PC-3 (cell line): ENCODE measurements at regions of chr6 and their contacts with region 1.

Region 1: GRCh38 chr6:119147101-119148053 is 68.9 kb upstream of the FAM184A start:
- DNase-seq: peak; percentile 95
- ATAC-seq: peak; percentile 77
- H3K4me3 ChIP-seq: peak overlapping the region; percentile 53
- H3K27ac ChIP-seq: peak overlapping the region; percentile 92
- H3K4me1 ChIP-seq: peaks cover 38% of the 10 kb centered on the region
- H3K27me3 ChIP-seq: no peaks in the 10 kb centered on the region
- CTCF ChIP-seq: no peak

Region 2: DNA sequence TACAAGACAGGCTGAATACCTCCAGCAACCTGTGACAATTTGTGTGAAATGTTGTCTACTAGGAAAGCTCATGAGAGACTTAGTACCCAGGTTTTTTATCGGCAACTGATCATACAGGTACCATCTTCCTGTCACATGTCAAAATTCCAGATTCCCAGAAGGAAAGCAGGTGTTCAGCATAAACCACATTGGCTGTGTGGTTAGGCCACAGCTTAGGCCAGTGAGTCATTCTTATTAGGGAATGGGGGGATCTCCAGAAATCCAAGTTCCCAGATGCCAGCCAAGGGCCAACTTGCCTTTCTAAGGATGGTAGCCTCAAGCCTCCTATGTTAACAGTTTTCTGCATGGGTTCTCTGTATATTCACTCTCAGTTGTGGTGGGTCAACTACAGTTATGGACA is 134.9 kb before region 1 on chr6:
- CTCF ChIA-PET with region 1: no interaction called
- POLR2A ChIA-PET with region 1: no interaction called
- intact Hi-C with region 1: no loop called
- DNase-seq: no peak
- ATAC-seq: no peak
- H3K4me3 ChIP-seq: no peak overlapping the region
- H3K27ac ChIP-seq: no peak overlapping the region
- H3K4me1 ChIP-seq: no peaks in the 10 kb centered on the region
- H3K27me3 ChIP-seq: no peaks in the 10 kb centered on the region
- CTCF ChIP-seq: no peak

Region 3: DNA sequence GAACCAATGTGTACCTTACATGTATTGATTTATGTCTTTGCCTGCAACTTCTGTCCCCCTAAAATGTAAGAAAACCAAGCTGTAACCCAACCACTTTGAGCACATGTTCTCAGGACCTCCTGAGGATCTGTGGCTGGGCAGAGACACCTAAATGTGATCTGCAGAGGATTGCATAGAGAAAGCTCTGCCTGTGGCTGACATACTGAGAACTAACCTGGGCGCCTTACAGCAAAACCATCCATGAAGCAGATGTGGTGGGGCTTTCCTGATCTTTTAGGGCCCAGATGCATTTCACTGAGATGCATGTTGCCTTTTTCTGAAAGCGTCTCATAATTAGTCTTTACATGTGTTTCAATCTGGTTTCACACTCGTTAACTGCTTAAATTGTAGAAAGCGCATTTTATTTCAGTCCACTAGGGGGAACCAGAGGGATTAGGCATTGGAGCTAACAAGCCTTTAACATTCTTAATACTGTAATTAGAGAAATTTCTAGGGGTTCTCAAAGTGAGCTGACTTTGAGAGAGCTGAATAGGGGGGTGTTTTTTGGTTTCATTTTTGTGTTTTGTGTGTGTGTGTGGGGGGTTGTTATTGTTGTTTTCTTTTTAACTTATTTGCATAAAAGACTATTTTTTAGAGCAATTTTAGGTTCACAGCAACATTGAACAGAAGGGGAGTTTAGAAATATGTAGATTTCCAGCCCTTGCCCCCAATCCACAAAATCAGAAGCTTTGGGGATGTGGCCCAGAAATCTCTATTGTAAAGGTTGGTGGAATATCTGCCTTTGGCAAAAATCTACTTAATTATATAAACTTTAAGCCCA is 18.0 kb before region 1 on chr6:
- CTCF ChIA-PET with region 1: interaction called, 11 read pairs
- POLR2A ChIA-PET with region 1: interaction called, 5 read pairs
- intact Hi-C with region 1: loop called (anchors 1 kb)
- DNase-seq: peak; percentile 75
- ATAC-seq: peak; percentile 62
- H3K4me3 ChIP-seq: peak overlapping the region; percentile 13; the same call in 1 of the 2 replicates
- H3K27ac ChIP-seq: peak overlapping the region; percentile 74
- H3K4me1 ChIP-seq: peaks cover 26% of the 10 kb centered on the region
- H3K27me3 ChIP-seq: no peaks in the 10 kb centered on the region
- CTCF ChIP-seq: peak; percentile 81

Region 4: GRCh38 chr6:119360262-119360915 is 213.0 kb after region 1 on chr6:
- CTCF ChIA-PET with region 1: no interaction called
- POLR2A ChIA-PET with region 1: no interaction called
- intact Hi-C with region 1: no loop called
- DNase-seq: no peak
- ATAC-seq: no peak
- H3K4me3 ChIP-seq: no peak overlapping the region
- H3K27ac ChIP-seq: no peak overlapping the region
- H3K4me1 ChIP-seq: no peaks in the 10 kb centered on the region
- H3K27me3 ChIP-seq: no peaks in the 10 kb centered on the region
- CTCF ChIP-seq: no peak

Region 5: GRCh38 chr6:119627908-119628669 is 480.7 kb after region 1 on chr6:
- CTCF ChIA-PET with region 1: no interaction called
- POLR2A ChIA-PET with region 1: no interaction called
- intact Hi-C with region 1: loop called (anchors 1 kb)
- DNase-seq: peak; percentile 71
- ATAC-seq: peak; percentile 78
- H3K4me3 ChIP-seq: peak overlapping the region; percentile 7; the same call in 1 of the 2 replicates
- H3K27ac ChIP-seq: peak overlapping the region; percentile 93
- H3K4me1 ChIP-seq: peaks cover 31% of the 10 kb centered on the region
- H3K27me3 ChIP-seq: no peaks in the 10 kb centered on the region
- CTCF ChIP-seq: peak; percentile 32; the same call in 1 of the 2 replicates

Region 6: DNA sequence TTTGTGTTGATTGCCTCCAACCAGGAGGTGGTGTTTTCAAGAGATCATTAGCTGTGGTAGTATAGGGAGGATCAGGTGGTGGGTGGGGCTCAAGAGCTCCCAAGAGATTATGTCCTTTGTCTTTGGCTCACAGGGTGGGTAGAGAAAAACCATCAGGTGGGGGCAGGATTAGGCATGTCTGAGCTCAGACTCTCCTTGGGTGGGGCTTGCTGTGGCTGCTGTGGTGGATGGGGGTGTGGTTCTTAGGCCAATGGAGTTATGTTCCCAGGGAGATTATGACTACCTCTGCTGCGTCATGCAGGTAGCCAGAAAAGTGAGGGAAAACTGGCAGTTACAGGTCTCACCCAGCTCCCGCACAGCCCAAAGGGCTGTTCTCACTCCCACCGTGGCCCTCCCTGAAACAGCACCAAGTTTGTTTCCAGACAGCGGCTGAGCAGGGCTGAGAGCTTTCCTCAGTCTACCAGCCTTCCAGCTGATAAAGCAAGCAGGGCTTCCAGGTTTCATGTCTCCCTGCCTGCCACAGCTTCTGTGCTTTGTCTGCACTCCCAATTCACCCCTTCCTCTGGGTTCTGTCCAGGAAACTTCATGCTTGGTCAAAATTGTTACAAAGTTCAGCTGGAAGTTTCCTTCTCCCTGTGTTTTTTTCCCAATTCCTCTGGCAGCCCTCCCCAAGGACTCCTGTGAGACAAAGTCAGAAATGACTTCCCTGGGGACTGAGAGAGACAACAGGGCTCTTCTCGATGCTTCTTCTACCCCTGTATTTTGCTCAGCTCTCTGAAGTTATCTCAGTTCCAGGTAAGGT is 683.3 kb after region 1 on chr6:
- CTCF ChIA-PET with region 1: no interaction called
- POLR2A ChIA-PET with region 1: no interaction called
- intact Hi-C with region 1: loop called (anchors 10 kb)
- DNase-seq: peak; percentile 79
- ATAC-seq: peak; percentile 38
- H3K4me3 ChIP-seq: no peak overlapping the region
- H3K27ac ChIP-seq: peak overlapping the region; percentile 95
- H3K4me1 ChIP-seq: peaks cover 44% of the 10 kb centered on the region
- H3K27me3 ChIP-seq: no peaks in the 10 kb centered on the region
- CTCF ChIP-seq: no peak

Region 7: DNA sequence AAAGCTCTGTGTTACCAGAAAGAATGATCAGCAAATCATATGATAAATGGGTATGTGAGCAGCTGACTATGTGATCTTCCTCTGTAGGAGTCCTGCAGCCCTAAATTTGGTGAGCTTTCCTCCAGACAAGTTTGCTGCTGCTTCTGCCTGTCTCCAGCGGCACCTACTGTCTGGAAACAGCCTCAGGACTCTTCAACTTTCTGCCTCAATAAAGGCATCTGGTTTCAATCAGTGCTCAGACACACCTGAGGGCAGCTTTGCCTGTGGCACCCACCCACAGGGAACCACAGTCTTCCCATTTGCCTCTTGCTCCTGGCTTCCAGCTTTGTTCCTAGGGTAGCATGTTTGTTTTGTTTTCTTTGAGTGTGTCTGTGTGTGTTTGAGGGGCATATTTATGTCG is 930.1 kb after region 1 on chr6:
- CTCF ChIA-PET with region 1: no interaction called
- POLR2A ChIA-PET with region 1: no interaction called
- intact Hi-C with region 1: loop called (anchors 5 kb)
- DNase-seq: peak; percentile 45
- ATAC-seq: peak; percentile 86
- H3K4me3 ChIP-seq: no peak overlapping the region
- H3K27ac ChIP-seq: no peak overlapping the region
- H3K4me1 ChIP-seq: no peaks in the 10 kb centered on the region
- H3K27me3 ChIP-seq: no peaks in the 10 kb centered on the region
- CTCF ChIP-seq: peak; percentile 56